PC-3 (cell line): ENCODE measurements at regions of chr14 and their contacts with region 1.

Region 1: GRCh38 chr14:91060351-91061055 is at the start of gene RPS6KA5:
- DNase-seq: peak; percentile 100
- ATAC-seq: peak; percentile 89
- H3K4me3 ChIP-seq: peak within 1 kb of the TSS; percentile 80
- H3K27ac ChIP-seq: peak within 1 kb of the TSS; percentile 71
- H3K4me1 ChIP-seq: peaks cover 18% of the 10 kb centered on the region
- H3K27me3 ChIP-seq: no peaks in the 10 kb centered on the region
- CTCF ChIP-seq: 0 out of 2 replicates have a peak, but pooled peaks have one; percentile 19
- total RNA-seq, gene RPS6KA5: 8.6 and 10.7 TPM in 2 replicates

Region 2: DNA sequence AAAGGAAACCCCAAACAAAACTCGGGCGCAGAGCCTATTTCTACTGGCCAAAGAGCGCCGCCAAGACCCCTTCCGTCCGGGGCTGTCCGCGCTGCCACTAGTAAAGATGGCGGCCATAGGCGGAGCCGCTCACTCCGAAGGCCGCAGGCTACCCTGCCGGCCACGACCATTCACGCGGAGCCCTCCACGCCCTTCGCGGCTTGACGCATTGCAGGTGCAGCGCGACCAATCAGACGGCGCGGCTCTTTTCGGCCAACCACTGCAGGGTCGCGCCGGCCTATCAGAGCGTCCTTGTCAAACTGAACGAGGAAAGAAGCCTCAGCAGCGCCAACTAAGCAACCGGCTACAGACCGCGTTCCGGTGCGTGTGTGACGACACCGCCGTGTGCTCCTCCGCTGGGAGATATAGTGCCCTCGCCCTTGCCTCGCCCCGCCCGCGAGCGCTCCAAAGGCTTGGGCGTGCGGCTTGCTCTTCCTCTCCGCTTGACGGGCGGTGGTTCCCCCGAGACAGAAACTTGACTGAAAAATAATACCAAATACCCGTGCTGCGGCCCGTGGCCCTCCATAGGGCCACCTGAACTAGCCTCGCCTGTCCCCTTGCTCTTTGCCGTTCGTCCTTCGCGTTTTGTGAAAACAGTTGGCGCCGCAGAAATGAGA is 677.3 kb before region 1 on chr14:
- CTCF ChIA-PET with region 1: no interaction called
- POLR2A ChIA-PET with region 1: no interaction called
- intact Hi-C with region 1: loop called (anchors 5 kb)
- DNase-seq: peak; percentile 100
- ATAC-seq: peak; percentile 92
- H3K4me3 ChIP-seq: peak overlapping the region; percentile 82
- H3K27ac ChIP-seq: peak overlapping the region; percentile 86
- H3K4me1 ChIP-seq: peaks cover 35% of the 10 kb centered on the region
- H3K27me3 ChIP-seq: no peaks in the 10 kb centered on the region
- CTCF ChIP-seq: 0 out of 2 replicates have a peak, but pooled peaks have one; percentile 10

Region 3: DNA sequence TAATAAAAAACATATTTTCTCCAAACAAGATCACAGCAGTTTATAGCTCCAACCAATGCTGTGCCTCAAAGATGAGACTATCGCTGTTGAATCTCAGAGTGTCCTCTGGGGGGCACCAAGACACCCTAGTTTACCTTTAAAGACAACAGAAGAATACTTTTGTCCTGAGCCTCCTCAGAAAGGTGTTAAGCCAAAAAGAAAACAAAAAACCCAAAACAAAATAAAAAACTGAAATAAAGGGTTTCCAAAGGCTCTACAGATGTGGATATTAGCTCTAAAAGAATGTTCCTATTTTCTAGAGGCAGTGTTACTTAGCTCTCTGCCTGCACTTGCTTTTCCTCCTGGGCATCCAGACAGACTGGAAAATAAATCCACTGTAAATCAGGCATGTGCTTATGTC is 157.4 kb before region 1 on chr14:
- CTCF ChIA-PET with region 1: interaction called, 26 read pairs
- POLR2A ChIA-PET with region 1: no interaction called
- intact Hi-C with region 1: loop called (anchors 1 kb)
- DNase-seq: peak; percentile 75
- ATAC-seq: peak; percentile 99
- H3K4me3 ChIP-seq: no peak overlapping the region
- H3K27ac ChIP-seq: no peak overlapping the region
- H3K4me1 ChIP-seq: no peaks in the 10 kb centered on the region
- H3K27me3 ChIP-seq: no peaks in the 10 kb centered on the region
- CTCF ChIP-seq: peak; percentile 91

Region 4: GRCh38 chr14:90995785-90996184 is 64.7 kb before region 1 on chr14:
- CTCF ChIA-PET with region 1: no interaction called
- POLR2A ChIA-PET with region 1: no interaction called
- intact Hi-C with region 1: loop called (anchors 2 kb)
- DNase-seq: peak; percentile 33
- ATAC-seq: peak; percentile 54; the same call in 1 of the 2 replicates
- H3K4me3 ChIP-seq: peak overlapping the region; percentile 36; the same call in 1 of the 2 replicates
- H3K27ac ChIP-seq: peak overlapping the region; percentile 54; the same call in 1 of the 2 replicates
- H3K4me1 ChIP-seq: peaks cover 17% of the 10 kb centered on the region
- H3K27me3 ChIP-seq: no peaks in the 10 kb centered on the region
- CTCF ChIP-seq: no peak

Region 5: DNA sequence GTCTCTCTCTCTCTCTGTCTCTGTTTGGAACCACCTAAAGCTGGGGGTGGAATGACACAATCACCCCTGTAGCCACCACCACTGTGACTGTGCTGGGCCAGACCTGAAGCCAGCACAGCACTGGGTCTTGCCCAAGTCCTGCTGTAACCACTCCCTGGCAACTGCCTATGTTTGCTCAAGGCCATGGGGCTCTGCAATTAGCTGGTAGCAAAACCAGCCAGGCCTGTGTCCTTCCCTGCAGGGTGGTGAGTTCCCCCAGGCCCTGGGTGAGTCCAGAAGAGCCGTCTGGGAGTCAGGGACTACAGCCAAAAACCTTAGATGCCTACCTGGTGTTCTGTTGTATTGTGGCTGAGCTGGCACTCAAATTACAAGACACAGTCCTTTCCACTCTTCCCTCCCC is 104.2 kb after region 1 on chr14:
- CTCF ChIA-PET with region 1: no interaction called
- POLR2A ChIA-PET with region 1: interaction called, 3 read pairs
- intact Hi-C with region 1: loop called (anchors 2 kb)
- DNase-seq: peak; percentile 86
- ATAC-seq: peak; percentile 98
- H3K4me3 ChIP-seq: no peak overlapping the region
- H3K27ac ChIP-seq: no peak overlapping the region
- H3K4me1 ChIP-seq: peaks cover 12% of the 10 kb centered on the region
- H3K27me3 ChIP-seq: no peaks in the 10 kb centered on the region
- CTCF ChIP-seq: no peak

Region 6: GRCh38 chr14:91299121-91300115 is 238.9 kb after region 1 on chr14:
- CTCF ChIA-PET with region 1: no interaction called
- POLR2A ChIA-PET with region 1: interaction called, 4 read pairs
- intact Hi-C with region 1: loop called (anchors 2 kb)
- DNase-seq: peak; percentile 53
- ATAC-seq: no peak
- H3K4me3 ChIP-seq: no peak overlapping the region
- H3K27ac ChIP-seq: peak overlapping the region; percentile 70
- H3K4me1 ChIP-seq: peaks cover 25% of the 10 kb centered on the region
- H3K27me3 ChIP-seq: no peaks in the 10 kb centered on the region
- CTCF ChIP-seq: no peak